ENCODE measurements at regions of chr2 and their contacts with region 1.

Region 1: DNA sequence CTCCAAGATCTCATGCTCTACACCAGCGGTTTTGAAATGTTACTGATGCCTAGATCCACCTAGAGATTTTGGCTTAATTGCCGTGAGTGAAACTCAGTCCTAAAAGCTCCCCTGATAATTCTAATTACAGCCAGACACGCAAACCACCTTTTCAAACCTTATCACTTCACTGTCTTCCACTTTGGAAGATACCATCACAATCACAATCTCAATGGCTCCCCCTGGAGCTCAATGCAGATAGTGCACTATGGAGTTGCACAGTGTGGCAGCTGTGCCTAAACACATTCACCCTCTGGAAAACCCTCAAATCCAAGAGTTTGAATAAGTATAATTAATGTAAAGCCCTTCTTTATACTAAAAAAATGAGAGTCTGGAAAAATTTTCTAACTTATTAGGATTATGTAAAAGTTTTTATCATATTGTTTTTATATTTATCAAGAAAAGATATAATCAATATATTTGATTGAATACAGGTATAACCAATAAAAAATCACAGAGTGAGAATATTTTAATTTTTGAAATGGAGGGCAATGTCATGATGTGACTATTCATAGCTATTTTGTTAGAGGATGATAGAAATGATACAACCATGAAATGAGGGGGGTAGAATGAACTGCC is 102.9 kb upstream of the SLC8A1 start:
- DNase-seq: peak; percentile 15
- H3K27ac ChIP-seq: no peak overlapping the region
- CTCF ChIP-seq: peak; percentile 79

Region 2: DNA sequence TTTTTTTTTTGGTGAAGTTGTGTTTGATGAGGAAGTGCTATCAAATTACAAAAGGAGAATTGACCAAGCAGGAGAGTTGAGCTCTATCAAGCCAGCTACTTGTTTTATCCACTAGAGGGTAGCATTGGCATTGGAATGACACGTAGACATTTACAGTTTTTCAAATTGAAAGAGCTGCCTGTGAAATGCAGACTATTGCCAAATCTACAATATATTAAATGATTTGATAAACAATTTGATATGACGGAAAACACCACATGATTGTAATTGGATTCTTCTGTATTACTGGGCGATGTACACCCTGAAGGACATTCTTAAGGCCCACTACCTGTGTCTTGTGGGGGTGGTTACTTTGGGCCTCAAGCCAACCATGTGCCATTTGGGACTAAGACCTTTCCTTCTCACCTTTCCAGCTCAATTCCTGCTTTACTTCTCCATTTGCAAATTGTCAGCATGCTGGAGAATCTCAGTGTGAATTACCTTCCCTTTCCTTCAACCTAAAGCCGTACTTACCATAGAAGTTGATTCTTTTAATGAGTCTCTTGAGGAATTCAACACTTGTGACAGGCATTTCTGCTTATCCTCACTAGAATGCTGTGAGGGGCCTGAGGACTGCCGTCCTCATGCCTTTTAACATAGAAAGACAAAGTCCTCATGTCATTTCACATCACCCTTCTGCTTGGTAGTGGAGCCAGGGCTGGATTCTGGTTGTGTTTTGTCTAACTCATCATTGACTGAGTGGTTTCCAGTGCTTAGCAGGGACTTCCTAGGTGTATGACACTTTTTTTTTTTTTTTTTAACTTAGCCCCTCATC is 640.9 kb before region 1 on chr2:
- CTCF ChIA-PET with region 1: interaction called, 10 read pairs
- POLR2A ChIA-PET with region 1: no interaction called
- DNase-seq: peak; percentile 48
- H3K27ac ChIP-seq: no peak overlapping the region
- CTCF ChIP-seq: peak; percentile 79

Region 3: GRCh38 chr2:40244675-40245074 is 310.1 kb before region 1 on chr2:
- CTCF ChIA-PET with region 1: interaction called, 11 read pairs
- POLR2A ChIA-PET with region 1: no interaction called
- DNase-seq: peak; percentile 36
- H3K27ac ChIP-seq: no peak overlapping the region
- CTCF ChIP-seq: peak; percentile 42

Region 4: DNA sequence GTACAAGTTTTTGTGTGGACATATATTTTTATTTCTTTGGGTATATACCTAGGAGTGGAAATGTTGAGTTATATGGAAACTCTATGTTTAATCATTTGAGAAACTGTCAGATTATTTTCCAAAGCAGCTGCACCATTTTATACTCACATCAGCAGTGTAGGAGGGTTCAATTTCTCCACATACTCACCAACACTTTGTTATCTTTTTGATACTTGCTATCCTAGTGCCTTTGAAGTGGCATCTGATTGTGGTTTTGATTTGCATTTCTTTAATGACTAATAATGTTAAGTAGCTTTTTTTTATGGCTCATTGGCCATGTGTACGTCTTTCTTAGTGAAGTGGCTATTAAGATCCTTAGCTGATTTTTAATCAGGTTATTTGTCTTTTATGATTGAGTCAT is 38.2 kb before region 1 on chr2:
- CTCF ChIA-PET with region 1: no interaction called
- POLR2A ChIA-PET with region 1: no interaction called
- DNase-seq: no peak
- H3K27ac ChIP-seq: no peak overlapping the region
- CTCF ChIP-seq: no peak

Measured in RWPE1 (cell line).